Transverse colon (tissue), 4 donors: ENCODE measurements at regions of chr22 and their contacts with region 1.

Region 1: DNA sequence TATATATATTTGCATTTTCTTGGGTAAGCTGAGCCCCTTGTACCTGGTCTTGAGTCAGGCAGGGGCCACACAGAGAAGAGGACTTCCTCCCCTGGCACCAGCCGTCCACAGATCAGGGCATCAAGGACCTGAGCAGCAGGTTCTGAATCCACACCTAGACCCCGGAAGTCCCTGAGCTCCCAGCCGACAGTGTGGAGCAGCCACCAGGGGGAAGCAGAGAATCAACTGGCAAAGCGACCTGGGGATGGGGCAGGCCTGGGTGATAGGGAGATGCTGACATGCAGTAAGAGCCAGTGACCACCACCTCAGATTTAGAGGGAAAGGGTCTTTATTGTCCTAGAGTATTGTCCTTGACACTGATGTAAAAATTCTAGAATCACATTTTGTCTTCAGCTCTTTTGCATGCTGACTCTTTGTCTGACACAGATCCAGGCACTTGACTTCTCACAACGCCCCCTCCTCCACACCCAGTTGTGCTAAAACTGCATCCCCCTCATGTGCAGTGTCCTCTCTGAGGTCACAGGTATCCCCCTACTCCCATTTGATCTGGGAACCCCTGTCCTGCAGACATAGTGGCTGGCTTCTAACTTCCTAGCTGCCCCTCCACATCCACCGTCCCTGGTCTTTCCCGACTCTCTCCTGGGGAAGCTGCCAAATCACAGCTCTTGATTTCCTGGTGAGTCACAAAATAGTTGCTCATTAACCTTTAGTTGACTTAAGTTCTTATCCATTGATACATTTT is 109.3 kb downstream of the GGTLC2 start:
- DNase-seq: peak; percentile 79
- H3K4me3 ChIP-seq: no peak overlapping the region
- H3K27ac ChIP-seq: no peak overlapping the region
- H3K4me1 ChIP-seq: no peaks in the 10 kb centered on the region
- H3K27me3 ChIP-seq: no peaks in the 10 kb centered on the region
- CTCF ChIP-seq: peak; percentile 57 to 72 (median 69)
- EP300 ChIP-seq: no peak
- POLR2A ChIP-seq: no peak

Region 2: GRCh38 chr22:22655452-22656290 is 98.0 kb before region 1 on chr22:
- in situ Hi-C with region 1: no loop called
- intact Hi-C with region 1: no loop called
- DNase-seq: no peak
- H3K4me3 ChIP-seq: no peak overlapping the region
- H3K27ac ChIP-seq: no peak overlapping the region
- H3K4me1 ChIP-seq: no peaks in the 10 kb centered on the region
- H3K27me3 ChIP-seq: no peaks in the 10 kb centered on the region
- CTCF ChIP-seq: no peak
- EP300 ChIP-seq: no peak
- POLR2A ChIP-seq: no peak

Region 3: DNA sequence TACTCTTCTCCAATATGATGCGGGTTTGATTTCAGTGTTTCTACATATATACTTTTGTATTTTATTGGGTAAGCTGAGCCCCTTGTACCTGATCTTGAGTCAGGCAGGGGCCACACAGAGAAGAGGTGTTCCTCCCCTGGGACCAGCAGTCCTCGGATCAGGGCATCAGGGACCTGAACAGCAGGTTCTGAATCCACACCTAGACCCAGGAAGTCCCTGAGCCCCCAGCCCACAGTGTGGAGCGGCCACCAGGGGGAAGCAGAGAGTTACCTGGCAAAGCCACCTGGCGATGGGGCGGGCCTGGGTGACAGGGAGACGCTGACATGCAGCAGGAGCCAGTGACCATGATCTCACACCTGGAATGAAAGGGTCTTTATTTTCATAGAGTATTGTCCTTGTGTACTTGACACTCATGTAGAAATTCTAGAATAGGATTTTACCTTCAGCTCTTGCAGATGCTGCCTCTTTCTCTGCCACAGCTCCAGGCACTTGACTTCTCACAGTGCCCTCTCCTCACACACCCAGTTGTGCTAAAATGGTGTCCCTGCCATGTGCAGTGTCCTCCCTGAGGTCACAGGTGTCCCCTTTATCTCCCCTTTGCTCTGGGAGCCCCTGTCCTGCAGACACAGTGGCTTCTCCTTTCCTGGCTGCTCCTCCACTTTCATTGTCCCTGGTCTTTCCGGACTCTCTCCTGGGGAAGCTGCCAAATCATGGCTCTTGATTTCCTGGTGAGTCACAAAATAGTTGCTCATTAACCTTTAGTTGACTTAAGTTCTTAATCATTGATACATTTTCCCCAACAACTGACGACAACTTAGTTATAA is 60.8 kb before region 1 on chr22:
- in situ Hi-C with region 1: no loop called
- intact Hi-C with region 1: no loop called
- DNase-seq: peak; percentile 84
- H3K4me3 ChIP-seq: no peak overlapping the region
- H3K27ac ChIP-seq: peak overlapping the region in 2 of 4 donors; percentile 42 to 48
- H3K4me1 ChIP-seq: peaks cover 0 to 13% (median 4%) of the 10 kb centered on the region in 4 donors
- H3K27me3 ChIP-seq: no peaks in the 10 kb centered on the region
- CTCF ChIP-seq: peak; percentile 55 to 81 (median 65)
- EP300 ChIP-seq: no peak
- POLR2A ChIP-seq: no peak

Region 4: DNA sequence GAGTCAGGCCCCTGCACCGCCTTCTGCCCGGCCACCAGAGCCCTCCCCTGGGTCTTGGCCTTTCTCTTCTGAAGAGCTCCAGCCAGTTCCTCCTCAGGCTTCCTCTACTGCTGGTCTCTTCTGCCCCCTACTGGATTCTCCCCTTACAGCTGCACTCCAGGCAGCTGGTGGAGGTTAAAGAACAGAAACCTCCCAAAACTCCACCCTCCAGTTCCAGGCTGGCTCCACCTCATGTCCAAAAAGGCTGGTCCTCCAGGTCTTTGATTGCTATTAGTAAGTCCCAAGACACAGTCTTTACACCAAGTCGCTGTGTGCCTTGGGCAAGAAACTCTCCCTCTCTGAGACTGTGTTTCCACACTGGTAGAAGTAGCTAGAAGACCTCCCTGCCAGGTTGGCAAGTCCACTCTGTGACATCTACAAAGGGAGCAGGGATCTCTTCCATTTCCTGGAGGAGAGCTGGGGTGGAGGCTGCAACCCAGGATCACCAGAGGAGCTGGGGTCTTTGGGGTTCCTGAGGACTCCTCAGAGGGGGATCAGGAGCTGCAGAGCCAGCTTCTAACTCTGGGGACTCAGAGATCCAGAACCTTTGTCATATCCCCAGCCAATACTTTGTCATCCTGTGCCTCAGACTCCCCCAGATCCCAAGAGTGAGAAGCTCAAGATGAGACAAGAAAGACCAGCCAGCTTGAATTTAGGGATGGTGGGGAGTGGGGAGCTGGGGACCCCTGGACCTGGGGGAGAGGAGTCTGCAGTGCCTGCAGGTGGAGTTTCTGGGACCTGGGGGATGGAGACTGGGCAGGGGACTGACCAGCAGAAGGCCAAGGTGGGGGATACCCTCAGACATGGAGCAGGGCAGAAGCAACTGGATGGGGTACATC is 130.6 kb after region 1 on chr22:
- in situ Hi-C with region 1: loop called in 1 of 4 experiments (anchors 25 kb)
- intact Hi-C with region 1: no loop called
- DNase-seq: peak; percentile 75
- H3K4me3 ChIP-seq: no peak overlapping the region
- H3K27ac ChIP-seq: peak overlapping the region in 1 of 4 donors; percentile 57
- H3K4me1 ChIP-seq: no peaks in the 10 kb centered on the region
- H3K27me3 ChIP-seq: no peaks in the 10 kb centered on the region
- CTCF ChIP-seq: peak; percentile 52 to 70 (median 67)
- EP300 ChIP-seq: no peak
- POLR2A ChIP-seq: no peak

Region 5: GRCh38 chr22:23054531-23055257 is 301.0 kb after region 1 on chr22:
- in situ Hi-C with region 1: no loop called
- intact Hi-C with region 1: no loop called
- DNase-seq: no peak
- H3K4me3 ChIP-seq: no peak overlapping the region
- H3K27ac ChIP-seq: no peak overlapping the region
- H3K4me1 ChIP-seq: no peaks in the 10 kb centered on the region
- H3K27me3 ChIP-seq: peaks cover 3% of the 10 kb centered on the region
- CTCF ChIP-seq: no peak
- EP300 ChIP-seq: no peak
- POLR2A ChIP-seq: no peak

Region 6: DNA sequence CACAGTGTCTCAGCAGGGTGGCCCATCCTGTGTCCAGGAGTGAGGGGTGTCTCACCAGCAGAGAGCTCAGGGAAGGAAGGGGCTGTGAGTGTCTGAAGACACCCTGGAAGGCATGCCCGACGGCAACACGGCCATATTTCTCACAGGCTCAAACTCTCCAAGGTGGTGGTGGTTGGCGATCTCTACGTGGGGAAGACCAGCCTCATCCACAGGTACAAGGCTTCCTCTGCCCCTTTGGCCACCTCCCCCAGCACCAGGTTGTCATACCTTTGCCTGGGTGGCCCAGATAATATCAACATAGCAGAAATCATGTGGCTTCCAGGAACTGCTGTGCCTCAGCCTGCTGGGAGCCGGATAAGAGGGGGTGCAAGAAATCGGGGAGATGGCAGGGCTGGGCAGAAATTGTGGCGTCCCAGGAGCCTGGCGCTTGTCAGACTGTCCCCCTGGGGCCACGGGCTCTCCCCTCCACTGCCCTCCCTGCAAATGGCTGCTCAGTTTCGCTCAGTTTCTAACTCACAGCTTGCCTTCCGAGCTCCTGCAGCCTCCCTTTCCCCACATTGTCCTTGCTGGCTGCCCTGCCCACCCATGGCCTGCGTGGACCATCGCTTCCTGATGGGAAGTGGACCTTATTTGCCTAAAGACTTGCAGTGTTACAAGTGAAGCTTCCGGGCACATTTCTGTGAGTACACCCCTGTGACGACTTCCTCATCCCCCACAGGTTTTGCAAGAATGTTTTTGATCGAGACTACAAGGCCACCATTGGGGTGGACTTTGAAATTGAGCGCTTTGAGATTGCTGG is 398.8 kb after region 1 on chr22:
- in situ Hi-C with region 1: no loop called
- intact Hi-C with region 1: no loop called
- DNase-seq: no peak
- H3K4me3 ChIP-seq: no peak overlapping the region
- H3K27ac ChIP-seq: no peak overlapping the region
- H3K4me1 ChIP-seq: peaks cover 0 to 5% (median 4%) of the 10 kb centered on the region in 4 donors
- H3K27me3 ChIP-seq: no peaks in the 10 kb centered on the region
- CTCF ChIP-seq: no peak
- EP300 ChIP-seq: no peak
- POLR2A ChIP-seq: no peak